Endothelial cell of umbilical vein (primary cell): ENCODE measurements at regions of chr5 and their contacts with region 1.

Region 1: DNA sequence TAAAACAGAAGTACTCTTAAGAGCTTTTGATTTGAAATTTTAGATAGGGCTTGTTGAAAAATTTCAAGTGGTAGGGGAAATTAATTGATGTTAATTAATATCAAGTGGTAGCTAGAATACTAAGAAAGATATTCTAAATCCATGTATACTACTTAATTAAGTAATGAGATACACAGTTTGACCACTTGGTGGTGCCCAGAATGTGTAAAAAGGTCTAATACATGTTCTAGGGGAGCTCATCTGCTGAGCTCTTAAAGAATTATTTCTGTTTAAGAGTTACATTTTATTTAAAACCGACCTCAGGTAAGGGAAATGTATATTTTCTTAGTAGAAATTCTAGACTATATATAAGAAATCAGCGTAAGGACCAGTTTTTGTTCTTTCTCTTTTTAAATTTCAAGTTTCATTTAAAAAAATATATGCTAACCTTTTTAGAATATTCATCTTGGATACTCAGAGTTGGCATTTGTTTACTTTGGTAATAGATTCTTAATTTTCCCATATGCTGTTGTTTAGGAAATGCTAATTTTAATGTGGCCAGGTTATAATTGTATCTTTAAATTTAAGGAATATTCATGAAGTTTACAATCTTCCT is 61.5 kb downstream of the LNPEP start:
- DNase-seq: peak; percentile 66
- H3K4me3 ChIP-seq: no peak overlapping the region
- H3K27ac ChIP-seq: no peak overlapping the region
- H3K4me1 ChIP-seq: no peaks in the 10 kb centered on the region
- H3K27me3 ChIP-seq: no peaks in the 10 kb centered on the region
- CTCF ChIP-seq: peak; percentile 27 to 34
- POLR2A ChIP-seq: no peak

Region 2: GRCh38 chr5:96986450-96986849 is 10.9 kb before region 1 on chr5:
- CTCF ChIA-PET with region 1: interaction called, 23 read pairs
- POLR2A ChIA-PET with region 1: no interaction called
- dilution Hi-C with region 1: no loop called
- intact Hi-C with region 1: no loop called
- DNase-seq: no peak
- H3K4me3 ChIP-seq: no peak overlapping the region
- H3K27ac ChIP-seq: no peak overlapping the region
- H3K4me1 ChIP-seq: no peaks in the 10 kb centered on the region
- H3K27me3 ChIP-seq: no peaks in the 10 kb centered on the region
- CTCF ChIP-seq: no peak
- POLR2A ChIP-seq: no peak

Region 3: DNA sequence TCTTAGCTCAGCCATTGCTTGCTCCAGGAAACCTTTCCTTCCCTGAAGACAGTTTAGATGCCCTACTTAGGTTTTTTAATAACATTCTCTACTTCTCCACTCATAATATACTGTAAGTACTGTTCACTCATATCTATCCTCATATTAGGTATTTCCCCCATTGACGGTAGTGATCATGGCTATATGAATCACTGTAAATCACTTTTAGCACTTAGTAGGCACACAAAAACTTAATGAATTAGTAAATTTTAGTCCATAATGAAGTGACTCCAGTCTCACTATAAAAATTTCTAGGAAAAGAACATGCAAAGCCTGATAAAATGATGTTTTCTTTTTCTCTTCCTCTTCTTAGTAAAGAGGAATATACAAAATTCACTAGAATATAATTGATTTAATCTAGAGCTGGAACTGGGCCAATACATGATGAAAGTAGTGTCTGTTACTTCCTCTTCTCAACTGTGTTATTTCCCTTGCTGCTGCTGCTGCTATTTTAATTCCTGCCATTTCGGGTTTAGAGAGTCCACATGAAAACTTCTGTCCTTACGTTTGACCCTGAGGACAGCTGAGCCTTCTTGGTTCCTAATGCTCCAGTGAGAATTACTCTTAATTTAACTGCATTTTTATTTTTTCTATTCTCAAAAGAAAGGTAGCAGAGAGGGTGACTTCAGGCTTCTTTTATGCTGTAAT is 12.0 kb after region 1 on chr5:
- CTCF ChIA-PET with region 1: interaction called, 31 read pairs
- POLR2A ChIA-PET with region 1: no interaction called
- dilution Hi-C with region 1: no loop called
- intact Hi-C with region 1: no loop called
- DNase-seq: peak; percentile 43
- H3K4me3 ChIP-seq: no peak overlapping the region
- H3K27ac ChIP-seq: no peak overlapping the region
- H3K4me1 ChIP-seq: peaks cover 6% of the 10 kb centered on the region
- H3K27me3 ChIP-seq: no peaks in the 10 kb centered on the region
- CTCF ChIP-seq: no peak
- POLR2A ChIP-seq: no peak

Region 4: DNA sequence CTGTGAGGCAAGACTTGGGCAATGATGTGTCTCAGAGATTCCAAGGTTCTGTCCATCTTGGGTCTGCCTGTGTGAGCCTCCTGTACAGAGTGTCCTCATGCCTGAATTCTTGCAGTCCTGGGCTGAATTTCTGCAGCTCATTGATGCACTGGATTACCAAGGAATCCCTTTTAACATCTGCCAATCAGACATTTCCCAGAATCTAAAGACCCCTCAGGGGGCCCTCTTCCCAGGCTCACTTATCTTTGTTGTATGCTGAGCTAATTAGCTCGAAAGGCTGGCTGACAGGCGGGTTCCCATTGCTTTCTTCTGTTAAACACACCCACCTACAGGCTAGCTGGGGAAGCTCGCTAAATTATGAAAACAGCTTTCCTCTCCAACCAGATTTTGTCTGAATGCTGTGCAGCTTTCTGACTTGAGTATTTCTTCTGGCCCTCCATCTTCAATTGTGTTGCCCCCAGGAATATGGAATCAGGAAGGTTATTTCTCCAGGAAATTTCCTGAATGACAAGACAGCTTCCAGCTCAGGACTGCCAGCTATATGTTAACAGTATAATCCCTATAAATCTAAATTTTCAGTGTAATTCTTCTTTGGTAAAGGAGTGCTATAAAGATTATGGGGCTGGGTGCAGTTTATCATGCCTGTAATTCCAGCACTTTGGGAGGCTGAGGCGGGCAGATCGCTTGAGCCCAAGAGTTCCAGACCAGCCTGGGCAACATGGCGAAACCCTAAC is 145.3 kb after region 1 on chr5 and contains the start of gene LIX1:
- CTCF ChIA-PET with region 1: interaction called, 98 read pairs
- POLR2A ChIA-PET with region 1: no interaction called
- dilution Hi-C with region 1: no loop called
- intact Hi-C with region 1: loop called (anchors 1 kb)
- DNase-seq: peak; percentile 50
- H3K4me3 ChIP-seq: no peak within 1 kb of the TSS
- H3K27ac ChIP-seq: no peak within 1 kb of the TSS
- H3K4me1 ChIP-seq: no peaks in the 10 kb centered on the region
- H3K27me3 ChIP-seq: peaks cover 5 to 13% of the 10 kb centered on the region in 2 experiments
- CTCF ChIP-seq: peak; percentile 52 to 53
- POLR2A ChIP-seq: no peak
- total RNA-seq, gene LIX1: not detected in 2 replicates

Region 5: DNA sequence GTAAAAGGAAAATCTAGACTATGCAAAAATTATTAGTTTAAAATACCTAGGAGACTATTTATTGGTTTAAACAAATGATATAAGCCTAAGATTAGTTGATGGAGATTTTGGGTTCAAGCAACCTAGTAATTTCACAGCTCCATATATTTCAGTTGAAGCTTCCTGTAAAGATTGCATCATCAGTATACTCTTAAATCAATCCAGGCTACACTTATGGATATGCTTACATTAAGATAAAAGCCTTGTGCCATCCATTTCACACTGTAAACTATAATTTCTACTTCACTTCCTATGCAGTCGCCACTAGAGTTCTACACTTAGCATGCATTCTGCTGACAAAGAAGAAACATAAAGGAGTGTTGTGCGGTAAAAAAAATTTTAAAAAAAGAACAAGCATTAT is 152.3 kb after region 1 on chr5:
- CTCF ChIA-PET with region 1: interaction called, 16 read pairs
- POLR2A ChIA-PET with region 1: interaction called, 3 read pairs
- dilution Hi-C with region 1: no loop called
- intact Hi-C with region 1: no loop called
- DNase-seq: no peak
- H3K4me3 ChIP-seq: no peak overlapping the region
- H3K27ac ChIP-seq: no peak overlapping the region
- H3K4me1 ChIP-seq: no peaks in the 10 kb centered on the region
- H3K27me3 ChIP-seq: no peaks in the 10 kb centered on the region
- CTCF ChIP-seq: no peak
- POLR2A ChIP-seq: no peak

Region 6: GRCh38 chr5:97162045-97162444 is 164.7 kb after region 1 on chr5:
- CTCF ChIA-PET with region 1: interaction called, 43 read pairs
- POLR2A ChIA-PET with region 1: interaction called, 3 read pairs
- dilution Hi-C with region 1: no loop called
- intact Hi-C with region 1: loop called (anchors 1 kb)
- DNase-seq: peak; percentile 86
- H3K4me3 ChIP-seq: no peak overlapping the region
- H3K27ac ChIP-seq: no peak overlapping the region
- H3K4me1 ChIP-seq: no peaks in the 10 kb centered on the region
- H3K27me3 ChIP-seq: no peaks in the 10 kb centered on the region
- CTCF ChIP-seq: peak; percentile 68 to 79
- POLR2A ChIP-seq: no peak